ENCODE measurements at regions of chr10 and their contacts with region 1.

Region 1: GRCh38 chr10:103153302-103154197 is 39.5 kb downstream of the NT5C2 start:
- DNase-seq: peak in 1 of 2 donors; percentile 37
- H3K4me3 ChIP-seq: peak overlapping the region; percentile 4 to 24
- H3K27ac ChIP-seq: peak overlapping the region; percentile 63 to 69
- H3K4me1 ChIP-seq: peaks cover 0 to 85% (median 25%) of the 10 kb centered on the region in 4 donors
- H3K27me3 ChIP-seq: no peaks in the 10 kb centered on the region
- CTCF ChIP-seq: no peak

Region 2: DNA sequence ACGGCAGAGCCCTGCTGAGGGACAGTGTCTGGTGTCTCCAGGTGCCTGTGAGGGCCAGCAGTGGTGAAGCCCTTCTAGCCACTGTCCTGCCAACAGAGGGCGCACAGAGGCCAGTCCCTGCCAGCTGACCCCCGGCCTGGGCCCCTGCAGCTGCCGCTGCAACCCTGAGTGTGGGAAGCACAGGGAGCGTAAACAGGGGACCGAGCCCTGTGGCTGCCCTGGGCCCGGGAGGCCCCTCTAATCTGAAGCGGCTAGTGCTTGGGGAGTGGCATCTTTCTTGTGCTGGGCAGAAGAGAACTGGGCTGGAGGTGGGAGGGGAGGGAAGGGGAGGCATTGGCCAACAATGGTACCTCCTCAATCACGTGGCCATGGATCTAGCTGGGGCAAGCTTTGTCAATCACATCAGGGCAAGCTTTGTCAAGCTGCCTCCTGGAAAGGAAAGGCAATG is 474.7 kb before region 1 on chr10:
- intact Hi-C with region 1: no loop called
- DNase-seq: peak in 1 of 2 donors; percentile 79
- H3K4me3 ChIP-seq: no peak overlapping the region
- H3K27ac ChIP-seq: no peak overlapping the region
- H3K4me1 ChIP-seq: peaks cover 13 to 44% (median 31%) of the 10 kb centered on the region in 4 donors
- H3K27me3 ChIP-seq: no peaks in the 10 kb centered on the region
- CTCF ChIP-seq: peak; percentile 43 to 49

Region 3: GRCh38 chr10:103168486-103169311 is 15.1 kb after region 1 on chr10:
- intact Hi-C with region 1: loop called (anchors 1 kb)
- DNase-seq: no peak
- H3K4me3 ChIP-seq: no peak overlapping the region
- H3K27ac ChIP-seq: no peak overlapping the region
- H3K4me1 ChIP-seq: no peaks in the 10 kb centered on the region
- H3K27me3 ChIP-seq: no peaks in the 10 kb centered on the region
- CTCF ChIP-seq: no peak